HCT116 (cell line): ENCODE measurements at regions of chr17 and their contacts with region 1.

Region 1: DNA sequence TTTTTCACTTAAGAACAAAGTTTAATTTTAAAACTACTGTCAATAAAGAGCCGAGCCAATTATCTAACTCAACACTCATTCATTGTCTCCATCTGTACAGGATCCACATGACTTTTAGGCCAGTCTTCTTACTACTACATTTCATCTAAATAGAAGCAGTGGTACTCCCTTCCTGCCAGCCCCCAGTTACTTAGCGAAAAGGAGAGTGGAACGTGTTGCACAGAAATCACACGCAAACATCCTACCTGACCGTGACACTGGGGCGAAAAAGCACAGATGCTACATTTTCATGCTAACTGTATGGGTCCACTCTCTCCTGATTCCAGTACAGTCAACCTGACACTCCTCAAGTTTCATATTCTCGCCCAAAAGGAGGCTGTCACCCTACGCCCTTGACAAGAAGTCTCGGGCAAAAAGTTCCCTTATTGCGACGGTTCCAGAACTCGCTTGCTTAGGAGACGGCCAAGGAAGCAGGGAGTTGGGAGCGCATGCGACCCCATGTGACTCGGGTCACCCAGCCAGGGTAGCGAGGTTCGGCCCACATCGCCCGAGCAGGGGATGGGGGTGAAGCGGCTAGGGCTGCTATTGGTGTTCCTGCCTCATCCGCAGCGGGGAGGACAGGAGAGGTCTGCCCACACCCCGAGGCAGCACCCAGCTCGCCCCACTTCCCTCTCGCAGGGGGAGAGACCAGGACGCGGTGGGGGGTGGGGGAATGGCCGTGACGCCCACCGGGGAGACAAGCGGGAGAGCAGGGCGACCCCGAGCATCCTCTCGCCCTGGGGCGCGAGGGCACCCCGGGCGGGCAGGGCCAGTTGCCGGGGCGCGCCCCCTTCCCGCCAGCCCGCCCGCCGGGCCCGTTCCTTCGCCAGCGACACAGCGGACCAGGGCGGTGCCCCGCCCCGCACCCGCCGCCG is 935 bp downstream of the GNA13 start:
- DNase-seq: no peak
- ATAC-seq: peak; percentile 46
- H3K4me3 ChIP-seq: peak overlapping the region; percentile 75 to 87
- H3K27ac ChIP-seq: peak overlapping the region; percentile 89
- H3K4me1 ChIP-seq: peaks cover 13 to 23% of the 10 kb centered on the region in 2 experiments; a peak in 3 of 4 replicates
- H3K27me3 ChIP-seq: no peaks in the 10 kb centered on the region
- CTCF ChIP-seq: no peak
- POLR2A ChIP-seq: no peak
- RAD21 ChIP-seq: no peak

Region 2: GRCh38 chr17:64975329-64976087 is 80.1 kb before region 1 on chr17:
- CTCF ChIA-PET with region 1: no interaction called
- POLR2A ChIA-PET with region 1: interaction called, 4 read pairs
- RAD21 ChIA-PET with region 1: interaction called in 1 of 2 experiments, 6 read pairs
- intact Hi-C with region 1: loop called (anchors 5 kb)
- DNase-seq: peak; percentile 95
- ATAC-seq: peak; percentile 93
- H3K4me3 ChIP-seq: peak overlapping the region; percentile 61 to 83
- H3K27ac ChIP-seq: peak overlapping the region; percentile 97
- H3K4me1 ChIP-seq: peaks cover 30 to 49% of the 10 kb centered on the region in 2 experiments
- H3K27me3 ChIP-seq: no peaks in the 10 kb centered on the region
- CTCF ChIP-seq: no peak
- POLR2A ChIP-seq: peak; percentile 96
- RAD21 ChIP-seq: no peak

Region 3: DNA sequence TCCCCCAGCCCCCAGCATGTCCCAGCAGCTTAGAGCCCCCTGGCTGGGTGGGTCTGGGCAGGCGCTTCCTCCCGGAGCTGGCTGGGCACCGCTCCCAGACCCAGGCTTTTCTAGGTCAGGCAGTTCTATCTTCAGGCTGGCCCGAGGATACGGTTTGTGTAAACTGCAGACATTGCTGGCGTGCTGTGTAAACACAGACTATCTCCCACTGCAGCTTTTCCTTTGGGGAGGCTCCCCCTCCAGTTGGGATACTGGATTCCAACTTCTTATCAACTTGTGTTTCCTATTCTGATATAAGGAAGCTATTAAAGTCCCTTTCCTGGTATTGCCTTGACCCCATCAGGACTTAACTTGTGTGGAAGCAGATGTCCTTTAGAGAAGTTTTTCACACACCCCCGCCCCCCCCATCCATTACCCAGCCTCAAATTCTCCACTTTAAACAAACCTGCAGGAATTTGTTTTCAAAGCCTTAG is 19.2 kb after region 1 on chr17:
- CTCF ChIA-PET with region 1: no interaction called
- POLR2A ChIA-PET with region 1: no interaction called
- RAD21 ChIA-PET with region 1: no interaction called
- intact Hi-C with region 1: no loop called
- DNase-seq: no peak
- ATAC-seq: no peak
- H3K4me3 ChIP-seq: no peak overlapping the region
- H3K27ac ChIP-seq: no peak overlapping the region
- H3K4me1 ChIP-seq: peaks cover 7 to 25% of the 10 kb centered on the region in 2 experiments; a peak in 3 of 4 replicates
- H3K27me3 ChIP-seq: no peaks in the 10 kb centered on the region
- CTCF ChIP-seq: no peak
- POLR2A ChIP-seq: no peak
- RAD21 ChIP-seq: no peak

Region 4: GRCh38 chr17:65085397-65085796 is 29.8 kb after region 1 on chr17:
- CTCF ChIA-PET with region 1: no interaction called
- POLR2A ChIA-PET with region 1: no interaction called
- RAD21 ChIA-PET with region 1: no interaction called
- intact Hi-C with region 1: no loop called
- DNase-seq: no peak
- ATAC-seq: no peak
- H3K4me3 ChIP-seq: no peak overlapping the region
- H3K27ac ChIP-seq: no peak overlapping the region
- H3K4me1 ChIP-seq: no peaks in the 10 kb centered on the region
- H3K27me3 ChIP-seq: no peaks in the 10 kb centered on the region; the same call in 1 of the 2 replicates
- CTCF ChIP-seq: no peak
- POLR2A ChIP-seq: no peak
- RAD21 ChIP-seq: no peak